Activated naive CD4-positive, alpha-beta T cell treated with anti-CD3 and anti-CD28 coated beads for 36 hours (primary cell): ENCODE measurements at regions of chr5 and their contacts with region 1.

Region 1: DNA sequence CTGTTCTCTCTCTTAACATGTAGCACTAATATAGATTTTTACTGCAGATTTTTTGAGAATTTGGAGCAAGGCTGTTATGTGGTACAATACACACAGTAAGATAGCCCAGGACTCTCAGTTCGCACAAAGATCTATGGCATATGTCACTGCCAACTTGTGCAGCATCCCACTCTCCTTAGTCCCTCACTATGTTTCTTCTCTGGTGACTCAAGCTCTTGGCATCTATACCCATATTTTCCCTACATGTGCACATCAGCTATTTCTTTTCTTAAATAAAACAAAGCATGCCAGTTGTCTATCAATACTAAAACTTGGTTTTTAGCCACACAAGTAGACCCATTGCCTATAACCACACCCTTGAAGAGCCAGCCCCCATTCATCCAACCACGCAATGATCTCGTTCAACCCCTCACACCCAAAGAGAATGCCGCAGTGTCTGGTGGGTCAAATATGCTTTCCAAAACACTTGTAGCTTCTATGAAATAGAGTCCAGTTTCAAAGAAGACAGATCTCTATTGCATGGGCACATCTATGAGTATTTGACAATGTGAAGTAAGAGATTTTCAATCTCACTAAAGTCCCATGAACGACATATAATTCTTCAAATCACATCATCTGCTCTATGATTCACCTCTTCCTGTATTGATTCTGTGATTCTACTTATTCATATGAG is 18.2 kb upstream of the IL7R start:
- DNase-seq: no peak
- H3K4me3 Mint-ChIP-seq: no peak overlapping the region
- H3K27ac Mint-ChIP-seq: peak overlapping the region; percentile 95
- H3K4me1 Mint-ChIP-seq: peaks cover 74% of the 10 kb centered on the region
- H3K27me3 Mint-ChIP-seq: no peaks in the 10 kb centered on the region

Region 2: DNA sequence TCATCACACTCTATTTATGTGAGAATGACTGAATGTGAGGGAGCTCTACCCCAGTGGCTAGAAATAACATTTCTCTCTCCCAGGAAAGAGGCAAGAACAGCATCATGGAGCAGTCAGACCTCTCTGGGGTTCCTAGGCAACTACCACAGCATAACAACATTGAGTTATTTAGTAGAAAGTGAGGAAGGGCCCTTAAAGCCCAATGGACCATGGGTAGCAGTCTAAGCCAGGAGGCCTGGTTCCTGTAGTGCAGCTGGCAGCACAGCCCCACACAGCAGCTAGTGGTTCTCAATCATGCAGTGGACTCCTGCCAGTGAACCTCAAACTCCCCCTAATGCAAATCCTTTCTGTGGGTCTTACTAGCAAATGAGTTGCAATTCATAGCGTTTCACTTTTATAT is 165.5 kb before region 1 on chr5:
- CTCF ChIA-PET with region 1: no interaction called
- intact Hi-C with region 1: loop called (anchors 2 kb)
- DNase-seq: peak; percentile 73
- H3K4me3 Mint-ChIP-seq: no peak overlapping the region
- H3K27ac Mint-ChIP-seq: peak overlapping the region; percentile 75
- H3K4me1 Mint-ChIP-seq: peaks cover 63% of the 10 kb centered on the region
- H3K27me3 Mint-ChIP-seq: no peaks in the 10 kb centered on the region

Region 3: DNA sequence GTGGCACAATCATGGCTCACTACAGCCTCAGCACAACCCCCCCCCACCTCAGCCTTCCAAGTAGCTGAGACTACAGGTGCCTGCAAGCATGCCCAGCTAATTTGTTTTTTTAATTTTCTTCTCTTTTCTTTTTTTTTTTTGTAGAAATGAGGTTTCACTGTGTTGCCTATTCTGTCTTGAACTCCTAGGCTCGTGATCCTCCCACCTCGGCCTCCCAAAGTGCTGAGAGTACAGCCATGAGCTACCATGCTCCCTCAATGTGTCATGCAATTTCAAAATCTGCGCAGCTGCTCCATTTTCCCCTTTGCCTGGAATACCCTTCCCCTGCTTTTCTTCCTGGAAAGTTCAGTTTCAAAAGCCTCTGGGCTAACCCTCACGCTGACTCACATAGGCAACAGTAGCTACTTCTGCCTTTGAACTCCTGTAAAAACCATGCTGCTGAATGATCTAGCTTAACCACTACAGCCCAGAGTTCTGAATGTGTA is 52.9 kb before region 1 on chr5:
- CTCF ChIA-PET with region 1: interaction called, 4 read pairs
- intact Hi-C with region 1: loop called (anchors 1 kb)
- DNase-seq: peak; percentile 76
- H3K4me3 Mint-ChIP-seq: peak overlapping the region; percentile 32
- H3K27ac Mint-ChIP-seq: peak overlapping the region; percentile 88
- H3K4me1 Mint-ChIP-seq: peaks cover 79% of the 10 kb centered on the region
- H3K27me3 Mint-ChIP-seq: no peaks in the 10 kb centered on the region

Region 4: GRCh38 chr5:35815089-35815936 is 23.2 kb before region 1 on chr5:
- CTCF ChIA-PET with region 1: interaction called, 10 read pairs
- intact Hi-C with region 1: loop called (anchors 1 kb)
- DNase-seq: peak; percentile 76
- H3K4me3 Mint-ChIP-seq: no peak overlapping the region
- H3K27ac Mint-ChIP-seq: no peak overlapping the region
- H3K4me1 Mint-ChIP-seq: peaks cover 45% of the 10 kb centered on the region
- H3K27me3 Mint-ChIP-seq: no peaks in the 10 kb centered on the region

Region 5: GRCh38 chr5:36882250-36882649 is 1043.7 kb after region 1 on chr5:
- CTCF ChIA-PET with region 1: no interaction called
- intact Hi-C with region 1: loop called (anchors 10 kb)
- DNase-seq: no peak
- H3K4me3 Mint-ChIP-seq: no peak overlapping the region
- H3K27ac Mint-ChIP-seq: peak overlapping the region; percentile 4
- H3K4me1 Mint-ChIP-seq: peaks cover 54% of the 10 kb centered on the region
- H3K27me3 Mint-ChIP-seq: no peaks in the 10 kb centered on the region